ENCODE measurements at regions of chr12 and their contacts with region 1.

Region 1: DNA sequence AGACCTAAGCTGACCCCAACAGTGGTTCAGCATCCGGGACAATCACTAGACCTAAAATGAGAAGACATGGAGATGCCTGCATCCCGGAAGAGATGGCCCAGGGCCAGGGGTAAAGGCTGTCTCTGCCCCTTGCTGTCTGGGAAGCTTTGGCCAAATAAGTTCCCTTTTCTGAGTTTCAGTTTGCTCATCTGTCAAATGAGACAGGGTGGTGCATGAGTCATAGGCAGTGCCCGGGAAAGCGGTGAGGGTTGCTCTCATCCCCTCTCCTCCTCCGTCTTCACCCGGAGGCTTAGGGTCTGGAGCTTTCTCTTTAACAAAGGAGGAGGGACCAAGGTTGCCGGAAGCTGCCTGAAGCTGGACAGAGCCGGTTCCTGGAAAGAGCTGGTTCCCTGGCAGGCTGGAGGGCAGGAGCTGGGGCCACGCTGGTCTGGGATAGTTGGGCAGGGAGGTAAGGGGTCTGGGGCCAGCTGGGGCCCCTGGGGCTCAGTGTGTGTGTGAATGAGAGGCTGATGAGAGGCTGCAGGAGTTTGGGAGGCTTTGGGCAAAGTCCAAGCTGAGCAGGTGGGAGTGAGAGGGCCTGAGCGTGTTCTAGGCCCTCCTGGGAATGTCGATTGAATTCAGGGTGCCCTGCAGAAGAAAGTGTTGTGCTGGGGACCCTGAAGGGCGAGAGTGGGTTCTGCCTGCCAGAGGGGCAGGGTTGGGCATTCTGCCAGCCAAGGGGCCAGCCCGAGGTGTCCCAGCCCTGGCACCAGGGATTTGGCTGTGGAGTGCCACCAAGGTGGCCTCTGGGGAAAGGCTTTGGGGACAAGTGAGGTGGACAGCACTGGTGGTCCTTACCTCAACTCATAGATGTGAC is at the start of gene SDSL:
- DNase-seq: peak; percentile 91
- H3K4me3 ChIP-seq: peak within 1 kb of the TSS; percentile 50 to 65 (median 62)
- H3K27ac ChIP-seq: peak within 1 kb of the TSS; percentile 27
- H3K4me1 ChIP-seq: peaks cover 5% of the 10 kb centered on the region
- H3K27me3 ChIP-seq: no peaks in the 10 kb centered on the region
- CTCF ChIP-seq: no peak
- total RNA-seq, gene SDSL: 5.7 to 10.8 TPM

Region 2: GRCh38 chr12:113048716-113049127 is 373.5 kb before region 1 on chr12:
- CTCF ChIA-PET with region 1: no interaction called
- dilution Hi-C with region 1: no loop called
- in situ Hi-C with region 1: no loop called
- intact Hi-C with region 1: loop called (anchors 5 kb)
- DNase-seq: peak; percentile 32
- H3K4me3 ChIP-seq: no peak overlapping the region
- H3K27ac ChIP-seq: no peak overlapping the region
- H3K4me1 ChIP-seq: no peaks in the 10 kb centered on the region
- H3K27me3 ChIP-seq: no peaks in the 10 kb centered on the region
- CTCF ChIP-seq: peak; percentile 71 to 84

Region 3: GRCh38 chr12:113221181-113221997 is 200.9 kb before region 1 on chr12 and contains the start of gene TPCN1:
- CTCF ChIA-PET with region 1: interaction called, 10 read pairs
- dilution Hi-C with region 1: no loop called
- in situ Hi-C with region 1: no loop called
- intact Hi-C with region 1: no loop called
- DNase-seq: peak; percentile 100
- H3K4me3 ChIP-seq: peak within 1 kb of the TSS; percentile 61 to 85 (median 83)
- H3K27ac ChIP-seq: peak within 1 kb of the TSS; percentile 76
- H3K4me1 ChIP-seq: peaks cover 16% of the 10 kb centered on the region
- H3K27me3 ChIP-seq: no peaks in the 10 kb centered on the region
- CTCF ChIP-seq: no peak
- total RNA-seq, gene TPCN1: 10.7 to 62.3 TPM

Region 4: DNA sequence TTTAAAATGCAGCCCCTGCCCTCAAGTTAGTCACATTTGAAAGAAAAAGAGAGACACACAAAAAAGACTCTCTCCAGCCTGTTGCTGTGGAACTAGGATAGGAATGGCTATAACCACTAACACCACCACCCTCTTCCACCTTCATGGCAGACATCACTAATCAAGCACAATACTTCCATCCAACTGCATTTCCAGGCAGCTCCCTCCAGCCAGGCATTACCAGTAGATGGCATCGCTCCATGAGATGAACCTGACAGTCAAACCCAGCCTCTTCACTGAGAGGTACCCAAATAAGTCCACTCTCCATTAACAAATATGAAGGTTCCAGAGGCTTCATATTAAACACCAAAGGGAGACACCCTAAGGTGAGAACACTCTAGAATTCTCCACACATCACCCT is 111.8 kb before region 1 on chr12:
- CTCF ChIA-PET with region 1: no interaction called
- dilution Hi-C with region 1: no loop called
- in situ Hi-C with region 1: loop called in 1 of 2 experiments (anchors 10 kb)
- intact Hi-C with region 1: loop called (anchors 1 kb)
- DNase-seq: peak; percentile 32
- H3K4me3 ChIP-seq: no peak overlapping the region
- H3K27ac ChIP-seq: no peak overlapping the region
- H3K4me1 ChIP-seq: no peaks in the 10 kb centered on the region
- H3K27me3 ChIP-seq: no peaks in the 10 kb centered on the region
- CTCF ChIP-seq: peak in 1 of 2 donors; percentile 15

Region 5: GRCh38 chr12:113358381-113359132 is 63.7 kb before region 1 on chr12 and contains the start of gene PLBD2:
- CTCF ChIA-PET with region 1: no interaction called
- dilution Hi-C with region 1: no loop called
- in situ Hi-C with region 1: no loop called
- intact Hi-C with region 1: loop called (anchors 5 kb)
- DNase-seq: peak; percentile 87
- H3K4me3 ChIP-seq: peak within 1 kb of the TSS; percentile 64 to 94 (median 72)
- H3K27ac ChIP-seq: peak within 1 kb of the TSS; percentile 18
- H3K4me1 ChIP-seq: peaks cover 10% of the 10 kb centered on the region
- H3K27me3 ChIP-seq: no peaks in the 10 kb centered on the region
- CTCF ChIP-seq: no peak
- total RNA-seq, gene PLBD2: 41.8 to 42.8 TPM

Measured in mammary epithelial cell (primary cell).